ENCODE measurements at regions of chr16 and their contacts with region 1.

Region 1: GRCh38 chr16:4616047-4616811 is 1.5 kb upstream of the UBALD1 start:
- DNase-seq: peak; percentile 98 to 99
- H3K4me3 ChIP-seq: peak overlapping the region; percentile 88
- H3K27ac ChIP-seq: peak overlapping the region; percentile 89
- H3K4me1 ChIP-seq: peaks cover 42% of the 10 kb centered on the region
- H3K27me3 ChIP-seq: no peaks in the 10 kb centered on the region
- CTCF ChIP-seq: no peak; the same call in 1 of the 2 replicates

Region 2: DNA sequence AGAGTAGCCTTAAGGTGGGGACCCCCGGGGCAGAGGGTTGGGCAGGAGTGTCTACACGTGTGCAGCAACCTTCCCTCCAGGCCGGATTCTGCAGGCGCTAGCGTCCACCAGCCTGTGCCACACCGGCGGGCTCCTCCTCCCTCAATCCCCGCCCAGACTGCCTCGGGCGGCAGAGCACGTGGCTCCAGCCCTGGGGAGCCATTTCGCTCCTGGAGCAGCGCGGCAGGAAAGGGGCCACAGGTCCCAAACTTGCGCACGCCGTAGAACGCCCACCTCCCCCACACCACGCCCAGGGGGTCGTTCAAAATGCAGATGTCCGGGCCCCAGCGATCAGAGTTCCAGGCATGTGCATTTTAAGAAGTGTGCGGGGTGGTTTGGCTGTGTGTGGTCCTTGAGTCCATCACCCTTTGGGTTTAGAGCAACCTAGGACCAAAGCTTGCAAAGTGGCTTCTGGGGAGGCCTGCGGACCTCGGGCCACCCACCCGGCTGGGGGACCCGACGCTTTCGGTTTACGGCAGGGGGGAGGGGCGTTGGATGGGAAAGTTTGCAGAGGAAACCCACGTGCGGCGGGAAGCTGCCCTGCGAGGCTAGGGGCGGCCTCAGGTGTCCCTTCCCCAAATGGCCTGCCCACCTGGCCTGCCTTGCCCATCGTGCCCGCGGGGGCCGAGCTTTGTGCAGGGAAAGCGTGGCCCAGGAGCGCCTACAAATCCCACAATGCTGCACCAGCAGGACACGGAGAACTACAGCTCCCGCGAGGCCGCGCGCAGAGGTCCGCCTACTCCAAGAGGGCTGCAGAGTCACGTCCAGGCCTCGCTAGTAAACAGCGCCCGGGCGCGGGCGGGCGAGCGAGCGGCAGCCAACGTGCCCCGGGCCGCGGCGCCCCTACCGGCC is 344.8 kb before region 1 on chr16:
- CTCF ChIA-PET with region 1: interaction called, 4 read pairs
- POLR2A ChIA-PET with region 1: no interaction called
- intact Hi-C with region 1: loop called (anchors 10 kb)
- DNase-seq: peak; percentile 82 to 94
- H3K4me3 ChIP-seq: peak overlapping the region; percentile 81
- H3K27ac ChIP-seq: peak overlapping the region; percentile 92
- H3K4me1 ChIP-seq: peaks cover 7% of the 10 kb centered on the region
- H3K27me3 ChIP-seq: no peaks in the 10 kb centered on the region
- CTCF ChIP-seq: no peak

Region 3: DNA sequence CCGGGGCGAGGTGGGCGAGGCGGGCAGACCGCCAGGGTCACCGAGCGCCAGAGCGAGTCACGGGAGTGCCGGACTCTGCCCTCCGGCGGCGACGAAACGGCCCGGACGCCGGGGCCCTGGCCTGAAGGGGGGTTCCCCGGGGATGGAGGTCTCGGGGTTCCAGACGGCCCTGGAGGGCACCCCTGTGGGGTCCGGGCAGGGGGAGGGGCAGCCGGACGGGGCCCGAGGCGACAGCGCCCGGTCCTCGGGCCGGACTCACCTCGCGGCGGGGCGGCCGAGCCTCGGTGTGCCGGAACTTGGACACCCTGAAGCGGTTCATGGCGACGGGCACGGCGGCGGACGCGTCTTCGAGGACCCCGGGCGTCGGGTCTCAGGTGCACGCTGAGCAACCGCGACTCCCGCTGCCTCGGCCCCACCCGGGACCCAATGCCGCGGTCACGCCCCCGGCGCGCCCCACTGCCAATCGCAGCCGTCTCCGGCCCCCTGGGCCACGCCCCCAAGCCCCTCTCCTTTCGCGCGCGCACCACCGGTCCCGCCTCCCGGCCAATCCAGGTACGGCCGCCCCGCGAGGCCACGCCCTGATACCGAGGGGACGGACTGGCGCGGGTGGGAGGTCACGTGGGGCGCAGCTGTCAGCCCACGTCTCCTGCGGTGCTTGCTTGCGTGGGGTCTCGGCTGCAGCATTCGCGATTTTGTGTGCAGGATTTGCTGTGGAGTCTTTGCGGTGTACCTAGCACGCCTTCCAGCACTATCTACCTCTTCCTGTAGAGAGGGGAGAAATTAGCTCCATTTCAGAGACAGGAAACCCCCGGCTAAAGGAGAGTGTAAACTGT is 199.8 kb before region 1 on chr16 and contains the start of gene CORO7:
- CTCF ChIA-PET with region 1: no interaction called
- POLR2A ChIA-PET with region 1: no interaction called
- intact Hi-C with region 1: loop called (anchors 10 kb)
- DNase-seq: peak; percentile 73 to 97
- H3K4me3 ChIP-seq: peak within 1 kb of the TSS; percentile 84
- H3K27ac ChIP-seq: no peak within 1 kb of the TSS
- H3K4me1 ChIP-seq: peaks cover 7% of the 10 kb centered on the region
- H3K27me3 ChIP-seq: no peaks in the 10 kb centered on the region
- CTCF ChIP-seq: no peak
- total RNA-seq, gene CORO7: 42.1 and 55.4 TPM in 2 replicates

Region 4: DNA sequence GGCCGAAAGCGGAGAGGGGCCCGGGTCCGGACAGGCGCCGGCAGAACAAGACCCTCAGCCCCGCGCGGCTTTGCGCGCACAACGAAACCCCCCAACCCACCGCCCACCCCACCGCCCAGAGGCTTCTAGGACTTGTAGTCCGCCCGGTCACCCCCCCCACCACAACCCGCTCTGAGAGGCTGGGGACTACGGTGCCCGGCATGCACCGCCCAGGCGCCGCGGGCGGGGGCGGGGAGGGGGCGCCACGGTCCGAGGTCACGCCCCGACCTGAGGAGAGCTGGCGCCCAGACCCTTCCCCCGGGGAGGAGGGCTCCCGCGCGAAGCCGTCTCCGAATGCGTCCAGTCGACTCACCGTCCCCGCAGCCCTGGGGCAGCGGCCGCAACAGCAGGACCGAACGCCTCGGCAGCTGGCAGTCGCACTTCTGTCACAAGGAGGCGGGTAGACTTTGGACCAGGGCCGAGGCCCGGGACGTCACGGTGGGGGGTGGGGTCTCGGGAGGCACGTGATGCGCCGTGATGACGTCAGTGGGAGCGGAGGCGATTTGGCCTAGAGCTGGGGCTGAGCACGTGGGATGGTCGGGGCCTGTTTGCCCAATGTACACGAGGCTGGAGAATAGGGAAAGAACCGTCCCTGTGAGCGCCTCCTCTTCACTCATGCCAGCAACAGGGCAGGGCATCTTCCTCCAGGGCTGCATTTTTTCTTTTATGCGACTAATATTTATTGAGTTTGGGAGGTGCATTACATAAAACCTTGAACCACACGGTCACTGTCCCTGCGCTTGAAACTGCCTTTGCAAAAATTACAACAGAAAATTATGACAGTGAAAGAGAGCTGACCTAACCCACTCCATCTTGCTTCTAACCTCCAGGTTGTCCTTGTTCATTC is 77.6 kb before region 1 on chr16 and contains the start of gene CDIP1:
- CTCF ChIA-PET with region 1: no interaction called
- POLR2A ChIA-PET with region 1: interaction called, 29 read pairs
- intact Hi-C with region 1: no loop called
- DNase-seq: peak; percentile 85 to 92
- H3K4me3 ChIP-seq: peak within 1 kb of the TSS; percentile 76
- H3K27ac ChIP-seq: no peak within 1 kb of the TSS
- H3K4me1 ChIP-seq: no peaks in the 10 kb centered on the region
- H3K27me3 ChIP-seq: no peaks in the 10 kb centered on the region
- CTCF ChIP-seq: no peak
- total RNA-seq, gene CDIP1: 10.7 and 18.4 TPM in 2 replicates

Region 5: GRCh38 chr16:4654011-4654963 is 38.1 kb after region 1 on chr16:
- CTCF ChIA-PET with region 1: interaction called, 10 read pairs
- POLR2A ChIA-PET with region 1: no interaction called
- intact Hi-C with region 1: no loop called
- DNase-seq: no peak
- H3K4me3 ChIP-seq: no peak overlapping the region
- H3K27ac ChIP-seq: no peak overlapping the region
- H3K4me1 ChIP-seq: no peaks in the 10 kb centered on the region
- H3K27me3 ChIP-seq: no peaks in the 10 kb centered on the region
- CTCF ChIP-seq: no peak